SK-N-SH (cell line): ENCODE measurements at regions of chr16 and their contacts with region 1.

Region 1: DNA sequence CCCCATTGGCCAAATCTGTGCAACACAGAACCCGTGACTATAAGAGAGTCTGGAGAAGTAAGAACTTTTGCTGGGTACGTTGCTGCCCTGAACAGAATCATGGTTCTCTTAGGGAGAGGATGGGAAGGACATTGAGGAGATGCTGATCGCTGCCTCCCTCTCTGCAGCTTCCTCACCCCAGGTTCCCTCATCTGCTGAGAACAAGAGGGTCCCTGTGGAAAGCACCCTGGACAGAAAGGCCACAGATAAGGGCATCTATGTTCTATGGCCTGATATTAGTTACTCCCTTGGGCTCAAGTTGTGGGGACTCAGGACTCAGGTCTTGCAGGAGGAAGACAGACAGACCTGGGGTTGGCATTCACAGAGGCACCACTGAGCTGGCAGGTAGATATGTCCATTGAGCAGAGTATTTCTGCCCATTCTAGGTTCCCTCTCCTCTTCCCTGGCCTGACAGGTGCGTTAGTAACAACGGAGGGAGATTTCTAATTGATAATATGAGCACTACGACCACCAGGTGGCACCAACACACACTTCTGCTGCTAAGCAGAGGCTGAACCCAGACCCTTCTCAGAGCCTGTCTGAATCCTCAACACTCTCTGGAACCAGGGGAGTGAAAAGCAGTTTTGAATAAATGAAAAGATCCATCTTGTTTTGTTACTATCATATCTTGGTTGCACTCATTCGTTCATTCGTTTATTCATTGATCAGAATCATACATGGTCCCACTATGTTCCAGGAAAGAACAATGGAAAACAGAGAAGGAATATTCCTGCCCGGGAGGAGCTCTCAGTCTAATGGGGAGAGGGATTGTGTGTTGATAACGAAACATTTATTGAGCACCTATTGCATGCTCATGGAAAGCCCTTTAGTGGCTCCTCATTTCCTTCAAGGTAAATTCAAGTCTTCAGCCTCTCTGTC is 56.4 kb downstream of the SLC6A2 start:
- DNase-seq: peak; percentile 61
- H3K4me3 ChIP-seq: no peak overlapping the region; a peak in 1 of 4 replicates
- H3K27ac ChIP-seq: no peak overlapping the region
- H3K4me1 ChIP-seq: peaks cover 0 to 14% of the 10 kb centered on the region in 2 experiments; a peak in 1 of 4 replicates
- H3K27me3 ChIP-seq: no peaks in the 10 kb centered on the region; the same call in 1 of the 2 replicates
- CTCF ChIP-seq: peak; percentile 74
- EP300 ChIP-seq: no peak
- RAD21 ChIP-seq: peak; percentile 77

Region 2: GRCh38 chr16:55471448-55472097 is 240.6 kb before region 1 on chr16:
- CTCF ChIA-PET with region 1: interaction called, 66 read pairs
- POLR2A ChIA-PET with region 1: no interaction called
- DNase-seq: no peak
- H3K4me3 ChIP-seq: peak overlapping the region in 1 of 2 experiments; percentile 19; a peak in 2 of 4 replicates
- H3K27ac ChIP-seq: peak overlapping the region; percentile 60 to 86; a peak in 3 of 4 replicates
- H3K4me1 ChIP-seq: peaks cover 8 to 25% of the 10 kb centered on the region in 2 experiments; a peak in 3 of 4 replicates
- H3K27me3 ChIP-seq: no peaks in the 10 kb centered on the region
- CTCF ChIP-seq: no peak
- EP300 ChIP-seq: peak in 1 of 2 experiments; percentile 62; a peak in 2 of 4 replicates
- RAD21 ChIP-seq: no peak

Region 3: DNA sequence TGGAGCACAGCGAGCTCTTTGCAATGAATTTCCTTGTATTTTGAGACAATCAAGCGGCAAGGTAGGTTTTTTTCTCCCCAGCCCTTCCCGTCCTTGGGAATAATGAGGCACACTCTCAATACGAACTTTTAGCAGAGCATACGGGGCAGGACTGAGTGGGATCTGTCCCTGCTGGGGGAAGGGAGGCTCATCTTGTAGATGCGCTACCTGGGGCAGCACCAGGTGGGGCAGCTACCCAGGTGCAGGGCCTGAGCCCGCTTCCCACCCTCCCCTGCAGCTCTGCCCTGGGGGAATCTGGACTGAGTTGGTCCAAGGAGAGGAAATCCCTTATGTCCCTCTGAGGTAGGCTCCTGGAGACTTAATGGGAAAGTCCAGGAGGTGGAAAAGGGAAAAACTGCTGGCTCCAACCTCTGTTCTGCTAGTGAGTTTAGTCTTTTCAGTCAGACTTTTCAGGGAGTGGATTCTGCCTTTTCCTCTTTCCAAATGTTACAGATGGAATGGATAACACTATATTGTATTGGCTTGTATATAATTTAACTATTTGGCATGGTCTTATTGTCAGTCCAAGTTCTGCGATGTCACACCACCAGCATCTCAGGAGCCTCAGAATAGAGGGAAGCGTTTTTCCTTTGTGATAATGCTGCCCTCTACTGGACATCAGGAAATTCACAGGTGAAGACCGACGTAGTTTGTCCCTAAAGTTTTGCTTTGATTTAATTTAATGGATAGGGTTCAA is 130.3 kb after region 1 on chr16:
- CTCF ChIA-PET with region 1: interaction called, 68 read pairs
- POLR2A ChIA-PET with region 1: no interaction called
- DNase-seq: peak; percentile 70
- H3K4me3 ChIP-seq: no peak overlapping the region; a peak in 1 of 4 replicates
- H3K27ac ChIP-seq: no peak overlapping the region
- H3K4me1 ChIP-seq: no peaks in the 10 kb centered on the region; a peak in 1 of 4 replicates
- H3K27me3 ChIP-seq: no peaks in the 10 kb centered on the region
- CTCF ChIP-seq: peak; percentile 82
- EP300 ChIP-seq: no peak
- RAD21 ChIP-seq: peak; percentile 92

Region 4: DNA sequence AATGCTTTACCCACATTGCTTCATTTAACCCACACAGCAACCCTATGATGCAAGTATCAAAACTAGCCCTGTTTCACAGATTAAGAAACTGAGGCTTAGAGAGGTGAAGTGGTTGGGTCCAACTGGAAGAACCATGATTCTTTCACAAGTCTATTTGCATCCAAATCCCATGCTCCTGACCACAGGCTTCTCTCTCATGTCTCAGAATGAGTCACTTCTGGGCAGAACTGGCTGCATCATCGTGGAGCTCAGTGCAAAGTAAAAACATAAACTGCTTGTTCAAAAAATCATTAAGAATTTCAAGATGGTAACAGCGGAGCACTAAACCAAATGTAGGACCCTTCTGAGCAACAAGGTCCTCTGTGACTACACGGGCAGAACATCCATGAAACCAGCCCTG is 140.9 kb after region 1 on chr16:
- CTCF ChIA-PET with region 1: interaction called, 12 read pairs
- POLR2A ChIA-PET with region 1: no interaction called
- DNase-seq: no peak
- H3K4me3 ChIP-seq: no peak overlapping the region
- H3K27ac ChIP-seq: no peak overlapping the region
- H3K4me1 ChIP-seq: no peaks in the 10 kb centered on the region; a peak in 1 of 4 replicates
- H3K27me3 ChIP-seq: no peaks in the 10 kb centered on the region
- CTCF ChIP-seq: no peak
- EP300 ChIP-seq: no peak
- RAD21 ChIP-seq: no peak